ENCODE measurements at regions of chr16 and their contacts with region 1.

Region 1: GRCh38 chr16:20849587-20850390 is 43.5 kb downstream of the REXO5 start:
- DNase-seq: no peak
- H3K4me3 ChIP-seq: no peak overlapping the region
- CTCF ChIP-seq: peak; percentile 93

Region 2: GRCh38 chr16:20611975-20612481 is 237.8 kb before region 1 on chr16:
- CTCF ChIA-PET with region 1: no interaction called
- POLR2A ChIA-PET with region 1: no interaction called
- DNase-seq: no peak
- H3K4me3 ChIP-seq: no peak overlapping the region
- CTCF ChIP-seq: no peak

Region 3: GRCh38 chr16:20781697-20782096 is 68.1 kb before region 1 on chr16:
- CTCF ChIA-PET with region 1: no interaction called
- POLR2A ChIA-PET with region 1: no interaction called
- DNase-seq: no peak
- H3K4me3 ChIP-seq: no peak overlapping the region
- CTCF ChIP-seq: no peak

Region 4: DNA sequence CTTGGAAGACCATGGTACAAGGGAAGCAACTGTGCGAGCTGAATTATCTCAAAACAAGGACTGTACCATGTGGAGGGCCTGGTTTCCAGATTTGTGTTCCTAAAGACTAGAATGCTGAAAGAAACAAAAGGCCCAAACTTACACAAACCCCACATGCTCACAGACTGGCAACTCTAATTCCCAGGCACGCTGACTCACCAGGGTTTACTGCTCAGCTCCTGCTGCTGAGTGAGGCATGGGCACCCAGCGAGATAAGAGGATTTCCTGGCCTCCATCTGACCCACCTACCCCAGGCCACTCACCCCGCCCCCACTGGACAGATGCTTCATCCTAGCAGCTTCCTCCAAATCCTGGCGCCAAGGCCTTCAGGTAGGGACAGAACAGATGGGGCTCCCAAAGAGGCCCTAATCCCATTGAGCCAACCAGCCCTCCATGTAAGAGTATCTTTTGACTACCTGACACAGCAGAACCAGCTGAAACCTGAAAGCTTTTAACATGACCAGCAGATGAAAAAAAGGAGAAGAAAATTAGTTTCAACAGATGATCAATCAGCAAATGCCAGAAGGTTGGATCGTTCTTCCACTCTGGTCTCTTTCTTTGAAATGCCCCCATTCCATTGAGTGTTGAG is 16.5 kb after region 1 on chr16:
- CTCF ChIA-PET with region 1: interaction called, 75 read pairs
- POLR2A ChIA-PET with region 1: interaction called, 4 read pairs
- DNase-seq: peak; percentile 38
- H3K4me3 ChIP-seq: no peak overlapping the region
- CTCF ChIP-seq: no peak

Region 5: DNA sequence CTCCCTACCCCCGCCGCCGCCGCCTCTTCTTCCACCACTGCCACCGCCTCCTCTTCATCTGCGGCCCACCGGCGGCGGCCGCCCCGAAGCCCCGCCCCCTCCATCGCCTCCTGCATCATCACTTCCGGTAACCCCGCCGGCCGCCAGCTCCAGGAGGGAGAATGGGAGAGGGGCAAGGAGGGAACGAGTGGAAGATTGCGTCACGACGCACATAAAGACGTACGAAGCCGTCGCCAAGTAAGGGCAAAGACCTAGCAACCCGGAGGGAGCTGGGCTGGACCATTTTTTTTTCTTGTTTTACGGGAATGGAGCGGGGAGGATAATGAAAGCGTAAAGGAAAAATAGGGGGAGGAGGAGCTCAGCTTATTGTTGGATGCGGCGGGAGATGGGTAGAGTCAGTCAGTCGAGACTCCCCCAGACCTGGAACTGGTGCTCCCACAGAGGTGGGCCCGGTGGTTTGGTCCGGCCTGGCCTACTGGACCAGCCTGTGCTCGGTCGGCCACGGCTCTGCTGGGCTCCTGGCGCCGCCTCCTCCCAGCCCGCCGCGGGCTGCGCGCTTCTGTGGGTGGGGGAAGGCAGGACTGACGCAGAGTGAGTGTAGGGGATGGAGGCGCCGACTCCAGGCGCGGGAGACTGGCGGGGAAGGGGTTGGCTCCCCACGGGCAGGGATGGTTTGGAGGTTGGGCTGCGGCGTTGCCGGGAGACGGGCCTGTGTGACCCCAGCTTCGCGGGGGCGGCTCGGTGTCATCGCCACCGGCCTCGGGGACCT is 50.7 kb after region 1 on chr16 and contains the starts of genes DCUN1D3 and LYRM1:
- CTCF ChIA-PET with region 1: interaction called, 17 read pairs
- POLR2A ChIA-PET with region 1: interaction called, 6 read pairs
- DNase-seq: peak; percentile 97
- H3K4me3 ChIP-seq: peak within 1 kb of the TSS; percentile 94
- CTCF ChIP-seq: no peak

Region 6: GRCh38 chr16:20944861-20945574 is 95.2 kb after region 1 on chr16:
- CTCF ChIA-PET with region 1: interaction called, 15 read pairs
- POLR2A ChIA-PET with region 1: no interaction called
- DNase-seq: no peak
- H3K4me3 ChIP-seq: no peak overlapping the region
- CTCF ChIP-seq: no peak

Region 7: GRCh38 chr16:21083729-21084268 is 234.0 kb after region 1 on chr16:
- CTCF ChIA-PET with region 1: interaction called, 135 read pairs
- POLR2A ChIA-PET with region 1: no interaction called
- DNase-seq: no peak
- H3K4me3 ChIP-seq: no peak overlapping the region
- CTCF ChIP-seq: peak; percentile 73

Region 8: DNA sequence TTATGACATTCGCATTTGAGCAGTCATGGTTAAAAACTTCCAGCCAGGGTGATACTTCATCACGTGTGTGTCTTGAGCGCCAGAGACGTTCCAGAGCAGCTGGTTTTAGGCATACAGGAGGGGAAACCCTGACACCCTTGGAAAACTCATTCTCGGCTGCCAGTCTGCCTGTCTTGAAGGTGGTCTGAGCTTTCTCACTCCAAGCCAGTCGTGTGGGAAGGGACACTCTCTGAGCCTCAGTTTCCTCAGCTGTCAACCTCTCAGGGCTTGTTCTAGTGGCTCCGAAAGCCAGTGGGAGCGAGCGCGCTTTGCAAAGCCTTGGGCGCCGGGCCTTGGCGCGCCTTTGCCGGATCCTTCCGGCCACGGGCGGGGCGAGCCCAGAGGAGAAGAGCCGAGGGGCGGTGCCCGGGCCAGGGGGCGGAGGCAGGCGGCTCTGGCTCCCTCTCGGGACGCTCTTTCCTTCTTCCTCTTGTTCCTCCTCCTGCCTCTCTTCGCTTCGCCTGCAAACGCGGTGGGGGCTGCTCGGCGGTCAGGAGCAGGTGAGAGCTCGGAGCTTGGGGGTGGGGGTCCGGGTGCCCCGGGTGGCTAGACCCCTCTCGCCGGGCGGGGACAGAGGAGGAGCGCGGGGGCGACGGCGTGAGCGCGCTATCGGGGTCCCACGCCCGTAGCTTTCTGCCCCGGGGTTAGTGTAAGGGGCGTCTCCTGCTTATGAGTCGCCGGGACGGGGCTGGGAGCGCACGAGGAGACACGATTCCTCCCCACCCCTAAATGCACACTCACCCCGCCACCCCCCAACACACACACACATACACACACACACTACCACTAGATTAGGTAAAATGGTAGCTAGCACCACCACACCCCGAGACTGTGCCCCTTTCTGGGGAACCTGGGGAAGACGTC is 308.7 kb after region 1 on chr16 and contains the start of gene LDAF1:
- CTCF ChIA-PET with region 1: interaction called, 33 read pairs
- POLR2A ChIA-PET with region 1: no interaction called
- DNase-seq: no peak
- H3K4me3 ChIP-seq: peak within 1 kb of the TSS; percentile 75
- CTCF ChIP-seq: no peak